B cell (primary cell): ENCODE measurements at regions of chr9 and their contacts with region 1.

Region 1: GRCh38 chr9:100028201-100028784 is 70.5 kb downstream of the ERP44 start:
- DNase-seq: peak; percentile 83
- ATAC-seq: peak; percentile 99
- H3K4me3 ChIP-seq: no peak overlapping the region
- H3K4me3 Mint-ChIP-seq: no peak overlapping the region
- H3K27ac ChIP-seq: no peak overlapping the region
- H3K27ac Mint-ChIP-seq: peak overlapping the region; percentile 3
- H3K4me1 ChIP-seq: peaks cover 16% of the 10 kb centered on the region in 2 donors
- H3K4me1 Mint-ChIP-seq: peaks cover 26% of the 10 kb centered on the region
- H3K27me3 ChIP-seq: no peaks in the 10 kb centered on the region
- H3K27me3 Mint-ChIP-seq: no peaks in the 10 kb centered on the region
- CTCF ChIP-seq: peak; percentile 99

Region 2: GRCh38 chr9:99459919-99460318 is 568.4 kb before region 1 on chr9:
- CTCF ChIA-PET with region 1: no interaction called
- POLR2A ChIA-PET with region 1: no interaction called
- intact Hi-C with region 1: no loop called
- DNase-seq: no peak
- ATAC-seq: no peak
- H3K4me3 ChIP-seq: no peak overlapping the region
- H3K4me3 Mint-ChIP-seq: no peak overlapping the region
- H3K27ac ChIP-seq: no peak overlapping the region
- H3K27ac Mint-ChIP-seq: no peak overlapping the region
- H3K4me1 ChIP-seq: no peaks in the 10 kb centered on the region
- H3K4me1 Mint-ChIP-seq: no peaks in the 10 kb centered on the region
- H3K27me3 ChIP-seq: no peaks in the 10 kb centered on the region
- H3K27me3 Mint-ChIP-seq: peaks cover 4% of the 10 kb centered on the region
- CTCF ChIP-seq: no peak

Region 3: DNA sequence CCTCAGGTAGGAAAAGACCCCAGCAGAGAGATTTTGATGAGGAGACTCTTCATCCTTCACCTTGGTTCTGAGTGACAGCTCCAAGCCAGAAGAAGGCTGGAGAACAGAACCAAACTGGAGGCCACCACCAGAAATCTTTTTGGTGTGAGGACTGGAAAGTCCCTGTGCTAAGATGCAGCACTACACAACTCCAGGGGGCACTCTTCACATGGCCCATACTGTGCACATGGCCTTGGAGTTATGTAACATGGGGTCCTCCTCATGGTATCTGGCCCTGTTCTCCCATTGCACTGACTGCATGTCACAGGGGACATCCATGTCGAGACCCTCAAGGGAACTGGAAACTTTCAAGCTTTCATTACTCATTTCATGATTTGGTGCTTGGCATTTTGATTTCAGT is 139.2 kb before region 1 on chr9:
- CTCF ChIA-PET with region 1: no interaction called
- POLR2A ChIA-PET with region 1: no interaction called
- intact Hi-C with region 1: no loop called
- DNase-seq: no peak
- ATAC-seq: no peak
- H3K4me3 ChIP-seq: no peak overlapping the region
- H3K4me3 Mint-ChIP-seq: no peak overlapping the region
- H3K27ac ChIP-seq: no peak overlapping the region
- H3K27ac Mint-ChIP-seq: no peak overlapping the region
- H3K4me1 ChIP-seq: no peaks in the 10 kb centered on the region
- H3K4me1 Mint-ChIP-seq: no peaks in the 10 kb centered on the region
- H3K27me3 ChIP-seq: no peaks in the 10 kb centered on the region
- H3K27me3 Mint-ChIP-seq: peaks cover 7% of the 10 kb centered on the region
- CTCF ChIP-seq: no peak

Region 4: GRCh38 chr9:100064872-100065581 is 36.7 kb after region 1 on chr9:
- CTCF ChIA-PET with region 1: no interaction called
- POLR2A ChIA-PET with region 1: no interaction called
- intact Hi-C with region 1: no loop called
- DNase-seq: no peak
- ATAC-seq: no peak
- H3K4me3 ChIP-seq: no peak overlapping the region
- H3K4me3 Mint-ChIP-seq: no peak overlapping the region
- H3K27ac ChIP-seq: peak overlapping the region in 1 of 2 donors; percentile 11
- H3K27ac Mint-ChIP-seq: no peak overlapping the region
- H3K4me1 ChIP-seq: peaks cover 17 to 23% of the 10 kb centered on the region in 2 donors
- H3K4me1 Mint-ChIP-seq: peaks cover 38% of the 10 kb centered on the region
- H3K27me3 ChIP-seq: no peaks in the 10 kb centered on the region
- H3K27me3 Mint-ChIP-seq: no peaks in the 10 kb centered on the region
- CTCF ChIP-seq: no peak

Region 5: GRCh38 chr9:100129772-100130171 is 101.5 kb after region 1 on chr9:
- CTCF ChIA-PET with region 1: no interaction called
- POLR2A ChIA-PET with region 1: no interaction called
- intact Hi-C with region 1: loop called (anchors 10 kb)
- DNase-seq: no peak
- ATAC-seq: no peak
- H3K4me3 ChIP-seq: no peak overlapping the region
- H3K4me3 Mint-ChIP-seq: no peak overlapping the region
- H3K27ac ChIP-seq: no peak overlapping the region
- H3K27ac Mint-ChIP-seq: no peak overlapping the region
- H3K4me1 ChIP-seq: no peaks in the 10 kb centered on the region
- H3K4me1 Mint-ChIP-seq: no peaks in the 10 kb centered on the region
- H3K27me3 ChIP-seq: no peaks in the 10 kb centered on the region
- H3K27me3 Mint-ChIP-seq: no peaks in the 10 kb centered on the region
- CTCF ChIP-seq: no peak

Region 6: GRCh38 chr9:100170556-100170955 is 142.3 kb after region 1 on chr9:
- CTCF ChIA-PET with region 1: no interaction called
- POLR2A ChIA-PET with region 1: no interaction called
- intact Hi-C with region 1: no loop called
- DNase-seq: no peak
- ATAC-seq: no peak
- H3K4me3 ChIP-seq: no peak overlapping the region
- H3K4me3 Mint-ChIP-seq: no peak overlapping the region
- H3K27ac ChIP-seq: no peak overlapping the region
- H3K27ac Mint-ChIP-seq: no peak overlapping the region
- H3K4me1 ChIP-seq: no peaks in the 10 kb centered on the region
- H3K4me1 Mint-ChIP-seq: no peaks in the 10 kb centered on the region
- H3K27me3 ChIP-seq: no peaks in the 10 kb centered on the region
- H3K27me3 Mint-ChIP-seq: no peaks in the 10 kb centered on the region
- CTCF ChIP-seq: no peak

Region 7: GRCh38 chr9:100216178-100216787 is 188.0 kb after region 1 on chr9:
- CTCF ChIA-PET with region 1: interaction called, 141 read pairs
- POLR2A ChIA-PET with region 1: no interaction called
- intact Hi-C with region 1: loop called (anchors 1 kb)
- DNase-seq: peak; percentile 81
- ATAC-seq: peak; percentile 85
- H3K4me3 ChIP-seq: no peak overlapping the region
- H3K4me3 Mint-ChIP-seq: no peak overlapping the region
- H3K27ac ChIP-seq: no peak overlapping the region
- H3K27ac Mint-ChIP-seq: no peak overlapping the region
- H3K4me1 ChIP-seq: no peaks in the 10 kb centered on the region
- H3K4me1 Mint-ChIP-seq: no peaks in the 10 kb centered on the region
- H3K27me3 ChIP-seq: no peaks in the 10 kb centered on the region
- H3K27me3 Mint-ChIP-seq: no peaks in the 10 kb centered on the region
- CTCF ChIP-seq: peak; percentile 79